PC-3 (cell line): ENCODE measurements at regions of chr7 and their contacts with region 1.

Region 1: GRCh38 chr7:28808796-28809527 is 149.2 kb downstream of the TRIL start:
- DNase-seq: peak; percentile 5
- ATAC-seq: no peak
- H3K4me3 ChIP-seq: no peak overlapping the region
- H3K27ac ChIP-seq: no peak overlapping the region
- H3K4me1 ChIP-seq: peaks cover 30% of the 10 kb centered on the region
- H3K27me3 ChIP-seq: no peaks in the 10 kb centered on the region
- CTCF ChIP-seq: no peak; the same call in 1 of the 2 replicates

Region 2: DNA sequence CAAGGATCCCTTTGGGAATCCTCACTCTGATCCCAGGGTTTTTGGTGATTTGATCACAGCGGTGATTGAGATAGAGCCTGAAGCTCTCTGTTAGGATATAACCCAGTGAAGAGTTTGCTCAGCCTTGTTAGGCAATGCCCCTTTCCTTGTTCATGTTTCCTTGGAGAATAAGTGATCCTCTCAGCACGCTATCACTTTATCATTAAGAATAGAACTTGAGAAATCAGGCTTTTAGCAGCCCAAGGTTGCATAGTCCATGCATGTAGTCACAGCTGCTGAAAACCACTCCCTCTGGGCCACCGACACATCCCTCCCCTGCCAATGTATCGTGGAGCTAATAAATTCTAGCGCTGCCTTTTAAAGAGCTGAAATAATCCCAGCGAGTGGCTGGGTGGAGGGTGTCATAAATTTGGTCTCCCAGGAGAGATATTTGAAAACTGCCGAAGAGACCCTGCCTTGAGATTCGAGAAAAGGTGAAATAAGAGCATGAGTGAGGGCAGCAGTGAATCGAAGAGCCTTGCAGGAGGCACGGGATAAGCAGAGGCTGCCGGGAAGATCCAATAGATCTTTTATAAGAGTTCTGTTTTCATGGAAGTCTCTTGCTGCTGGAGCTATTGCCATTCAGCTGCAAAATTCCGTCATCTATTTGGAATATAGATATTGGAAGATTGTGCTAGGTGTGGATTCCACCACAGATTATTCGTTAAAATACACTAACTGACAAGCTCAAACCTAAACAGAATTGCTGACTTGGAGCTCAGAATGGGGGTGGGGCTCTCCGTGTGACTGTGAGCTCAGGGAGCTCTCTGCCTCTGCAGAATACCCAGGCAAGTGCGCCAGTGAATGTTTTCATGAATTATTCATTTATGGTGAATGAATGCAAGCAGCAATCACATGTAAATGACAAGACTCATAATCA is 100.7 kb before region 1 on chr7:
- CTCF ChIA-PET with region 1: no interaction called
- POLR2A ChIA-PET with region 1: no interaction called
- intact Hi-C with region 1: no loop called
- DNase-seq: no peak
- ATAC-seq: no peak
- H3K4me3 ChIP-seq: no peak overlapping the region
- H3K27ac ChIP-seq: no peak overlapping the region
- H3K4me1 ChIP-seq: no peaks in the 10 kb centered on the region
- H3K27me3 ChIP-seq: no peaks in the 10 kb centered on the region
- CTCF ChIP-seq: no peak

Region 3: GRCh38 chr7:28761505-28761904 is 47.5 kb before region 1 on chr7:
- CTCF ChIA-PET with region 1: no interaction called
- POLR2A ChIA-PET with region 1: no interaction called
- intact Hi-C with region 1: loop called (anchors 5 kb)
- DNase-seq: peak; percentile 50
- ATAC-seq: peak; percentile 54; the same call in 1 of the 2 replicates
- H3K4me3 ChIP-seq: no peak overlapping the region
- H3K27ac ChIP-seq: no peak overlapping the region
- H3K4me1 ChIP-seq: no peaks in the 10 kb centered on the region; the same call in 1 of the 2 replicates
- H3K27me3 ChIP-seq: no peaks in the 10 kb centered on the region
- CTCF ChIP-seq: no peak

Region 4: DNA sequence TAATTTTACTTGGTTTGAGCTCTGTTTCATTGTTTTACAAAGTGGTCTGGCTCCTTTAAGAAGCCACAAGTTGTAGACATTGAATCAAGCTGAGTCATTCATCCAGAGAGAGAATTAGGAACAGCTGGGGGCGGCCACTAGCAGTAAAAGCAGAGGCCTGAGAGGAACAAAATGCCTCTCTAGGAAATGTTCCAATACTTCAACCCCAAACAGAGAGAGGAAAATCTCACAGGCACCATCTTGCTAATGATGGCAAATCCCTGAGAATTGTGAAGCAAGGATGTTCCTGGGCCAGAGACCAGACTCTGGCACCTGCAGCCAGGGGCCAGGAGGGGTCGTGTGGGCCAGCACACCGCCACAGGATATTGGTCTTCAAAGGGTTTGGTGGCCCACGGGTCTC is 175.7 kb after region 1 on chr7:
- CTCF ChIA-PET with region 1: no interaction called
- POLR2A ChIA-PET with region 1: no interaction called
- intact Hi-C with region 1: no loop called
- DNase-seq: peak; percentile 69
- ATAC-seq: peak; percentile 89
- H3K4me3 ChIP-seq: no peak overlapping the region
- H3K27ac ChIP-seq: peak overlapping the region; percentile 26; the same call in 1 of the 2 replicates
- H3K4me1 ChIP-seq: peaks cover 18% of the 10 kb centered on the region
- H3K27me3 ChIP-seq: no peaks in the 10 kb centered on the region
- CTCF ChIP-seq: no peak